ENCODE measurements at regions of chr6 and their contacts with region 1.

Region 1: GRCh38 chr6:72411872-72412708 is 209.8 kb upstream of the KCNQ5 start:
- DNase-seq: peak; percentile 74 to 90 (median 87)
- H3K4me3 ChIP-seq: no peak overlapping the region
- H3K27ac ChIP-seq: no peak overlapping the region
- H3K4me1 ChIP-seq: no peaks in the 10 kb centered on the region
- H3K27me3 ChIP-seq: no peaks in the 10 kb centered on the region
- CTCF ChIP-seq: peak; percentile 100

Region 2: GRCh38 chr6:73180763-73181619 is 768.9 kb after region 1 on chr6:
- intact Hi-C with region 1: loop called (anchors 10 kb)
- DNase-seq: peak in 4 of 5 donors; percentile 43 to 70 (median 56)
- H3K4me3 ChIP-seq: peak overlapping the region in 2 of 3 donors; percentile 50 to 62
- H3K27ac ChIP-seq: no peak overlapping the region
- H3K4me1 ChIP-seq: peaks cover 0 to 2% (median 0%) of the 10 kb centered on the region in 3 donors
- H3K27me3 ChIP-seq: no peaks in the 10 kb centered on the region
- CTCF ChIP-seq: peak; percentile 68

Measured in kidney (tissue), 22 donors.